Common myeloid progenitor, CD34-positive (primary cell): ENCODE measurements at regions of chr20 and their contacts with region 1.

Region 1: DNA sequence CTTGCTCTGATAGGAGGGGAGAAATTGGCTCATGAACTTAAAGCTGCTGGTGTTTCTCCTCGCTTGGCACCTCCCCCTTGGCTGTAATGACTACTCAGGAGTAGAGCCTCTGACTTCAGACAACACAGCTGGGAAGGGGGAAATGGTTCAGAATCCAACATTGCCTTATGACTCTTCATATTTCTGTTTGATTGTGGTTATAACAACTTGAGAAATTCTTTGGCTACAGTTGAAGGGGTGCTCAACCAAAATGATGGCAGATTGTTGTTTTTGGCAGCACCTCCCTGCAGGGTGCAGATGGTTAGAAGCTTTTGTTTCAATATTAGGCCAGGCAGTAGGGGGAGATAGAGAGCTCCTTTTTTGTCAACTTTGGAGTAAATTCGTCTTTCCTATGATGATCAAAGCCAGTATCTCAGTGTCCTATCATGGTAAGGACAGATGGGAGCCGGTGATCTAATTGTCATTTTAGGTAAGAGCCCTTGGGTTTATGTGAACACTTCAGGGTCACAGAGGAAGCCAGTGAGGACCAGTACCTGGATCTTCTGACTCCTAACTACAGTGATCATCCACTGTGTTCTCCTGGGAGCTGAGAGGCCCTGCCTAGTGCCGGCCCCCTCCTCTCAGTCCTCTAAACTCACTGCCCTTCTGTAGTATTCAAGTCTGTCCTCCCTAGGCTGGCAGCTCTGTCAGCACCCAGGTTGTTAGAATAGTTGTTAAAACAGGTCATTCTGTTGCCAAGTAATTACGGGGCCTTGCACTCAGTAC is 39.9 kb downstream of the RPRD1B start:
- DNase-seq: peak; percentile 38 to 66 (median 55)
- H3K4me3 ChIP-seq: no peak overlapping the region
- H3K27ac ChIP-seq: no peak overlapping the region
- H3K4me1 ChIP-seq: no peaks in the 10 kb centered on the region
- H3K27me3 ChIP-seq: no peaks in the 10 kb centered on the region

Region 2: GRCh38 chr20:37880726-37881591 is 192.5 kb before region 1 on chr20:
- CTCF ChIA-PET with region 1: no interaction called
- POLR2A ChIA-PET with region 1: no interaction called
- DNase-seq: peak in 1 of 3 donors; percentile 14
- H3K4me3 ChIP-seq: no peak overlapping the region
- H3K27ac ChIP-seq: no peak overlapping the region
- H3K4me1 ChIP-seq: no peaks in the 10 kb centered on the region
- H3K27me3 ChIP-seq: peaks cover 0 to 2% (median 0%) of the 10 kb centered on the region in 5 experiments

Region 3: GRCh38 chr20:38050686-38051085 is 22.8 kb before region 1 on chr20:
- CTCF ChIA-PET with region 1: interaction called, 10 read pairs
- POLR2A ChIA-PET with region 1: no interaction called
- DNase-seq: no peak
- H3K4me3 ChIP-seq: no peak overlapping the region
- H3K27ac ChIP-seq: no peak overlapping the region
- H3K4me1 ChIP-seq: peaks cover 0 to 3% (median 0%) of the 10 kb centered on the region in 4 experiments
- H3K27me3 ChIP-seq: no peaks in the 10 kb centered on the region

Region 4: GRCh38 chr20:38057351-38057972 is 16.0 kb before region 1 on chr20:
- CTCF ChIA-PET with region 1: interaction called, 19 read pairs
- POLR2A ChIA-PET with region 1: no interaction called
- DNase-seq: peak; percentile 65 to 73 (median 70)
- H3K4me3 ChIP-seq: no peak overlapping the region
- H3K27ac ChIP-seq: no peak overlapping the region
- H3K4me1 ChIP-seq: peaks cover 0 to 2% (median 0%) of the 10 kb centered on the region in 4 experiments
- H3K27me3 ChIP-seq: no peaks in the 10 kb centered on the region

Region 5: DNA sequence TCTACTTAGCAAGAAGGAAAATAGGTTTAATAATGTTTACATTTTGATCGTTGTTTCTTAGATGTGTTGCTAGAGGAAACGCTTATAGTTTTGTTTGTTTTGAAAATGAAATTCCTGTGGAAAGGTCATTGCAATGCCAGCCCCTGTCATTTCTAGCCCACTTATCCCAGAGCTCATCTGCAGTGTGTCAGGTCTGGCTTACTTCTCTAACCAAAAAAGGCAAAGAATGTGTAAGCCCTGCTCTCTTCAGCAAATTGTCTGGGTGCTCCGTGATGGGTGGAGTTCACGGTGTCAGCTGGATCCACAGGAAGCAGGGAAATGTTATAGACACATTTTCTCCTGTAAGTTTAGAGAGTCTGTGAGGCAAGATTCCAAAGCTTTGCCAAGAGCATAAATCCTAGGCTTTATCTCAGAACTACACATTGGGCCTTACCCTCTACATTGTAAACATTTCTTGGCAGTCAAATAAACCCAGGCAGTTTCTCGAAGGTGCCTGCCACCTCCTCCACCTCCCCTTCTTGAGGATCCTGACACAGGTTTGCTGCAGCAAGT is 11.0 kb after region 1 on chr20:
- CTCF ChIA-PET with region 1: interaction called, 21 read pairs
- POLR2A ChIA-PET with region 1: no interaction called
- DNase-seq: peak in 1 of 3 donors; percentile 3
- H3K4me3 ChIP-seq: no peak overlapping the region
- H3K27ac ChIP-seq: peak overlapping the region in 1 of 2 experiments; percentile 54
- H3K4me1 ChIP-seq: no peaks in the 10 kb centered on the region
- H3K27me3 ChIP-seq: no peaks in the 10 kb centered on the region

Region 6: DNA sequence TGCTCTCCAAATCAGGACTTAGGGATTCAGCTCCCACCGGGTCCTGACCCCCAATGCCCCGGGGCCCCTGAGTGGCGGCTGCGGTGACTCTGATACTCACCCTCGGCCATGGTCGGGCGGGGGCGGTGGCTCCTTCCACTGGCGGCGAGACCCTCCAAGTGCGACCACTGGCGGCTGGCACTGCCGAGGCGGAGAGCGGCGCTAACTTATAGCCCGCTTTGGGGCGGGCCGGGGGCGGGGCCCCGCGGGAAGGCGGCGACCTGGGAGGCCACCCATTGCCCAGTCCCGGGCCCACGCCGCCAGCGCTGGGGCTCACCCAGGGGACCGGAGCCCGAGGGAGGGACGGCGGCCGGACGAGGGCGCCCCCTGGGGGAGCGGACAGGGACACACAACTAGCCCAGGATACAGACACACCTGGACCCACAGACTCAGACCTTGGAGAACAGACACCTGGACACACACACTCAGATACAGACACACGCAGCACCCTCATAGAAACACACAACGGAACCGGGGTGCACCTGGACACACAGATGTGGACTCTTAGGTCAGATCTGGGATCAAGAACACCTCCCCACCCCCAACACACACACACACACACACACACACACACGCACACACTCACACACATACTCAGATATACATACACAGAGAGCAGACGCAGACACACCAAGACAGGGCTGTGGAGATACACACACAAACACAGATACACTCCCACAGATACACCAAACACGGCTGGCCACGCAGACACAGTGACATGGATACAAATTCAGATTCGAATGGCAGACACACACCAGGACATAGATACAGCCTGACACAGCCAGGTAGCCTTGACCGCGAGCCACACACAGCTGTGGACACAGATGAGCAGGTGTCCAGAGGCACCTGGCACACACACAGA is 91.8 kb after region 1 on chr20 and contains the start of gene TGM2:
- CTCF ChIA-PET with region 1: interaction called, 13 read pairs
- POLR2A ChIA-PET with region 1: no interaction called
- DNase-seq: peak; percentile 56 to 73 (median 68)
- H3K4me3 ChIP-seq: peak within 1 kb of the TSS in 2 of 7 experiments; percentile 37 to 48
- H3K27ac ChIP-seq: no peak within 1 kb of the TSS
- H3K4me1 ChIP-seq: peaks cover 0 to 27% (median 8%) of the 10 kb centered on the region in 4 experiments
- H3K27me3 ChIP-seq: peaks cover 0 to 22% (median 2%) of the 10 kb centered on the region in 5 experiments

Region 7: GRCh38 chr20:38221119-38221589 is 147.7 kb after region 1 on chr20:
- CTCF ChIA-PET with region 1: interaction called, 82 read pairs
- POLR2A ChIA-PET with region 1: no interaction called
- DNase-seq: peak; percentile 51 to 73 (median 70)
- H3K4me3 ChIP-seq: no peak overlapping the region
- H3K27ac ChIP-seq: no peak overlapping the region
- H3K4me1 ChIP-seq: peaks cover 0 to 2% (median 0%) of the 10 kb centered on the region in 4 experiments
- H3K27me3 ChIP-seq: peaks cover 0 to 6% (median 0%) of the 10 kb centered on the region in 5 experiments